ENCODE measurements at regions of chr9 and their contacts with region 1.

Region 1: GRCh38 chr9:5442400-5443011 is 4.8 kb upstream of the PLGRKT start:
- DNase-seq: peak; percentile 60 to 72 (median 71)
- H3K4me3 ChIP-seq: no peak overlapping the region
- H3K27ac ChIP-seq: no peak overlapping the region
- H3K4me1 ChIP-seq: peaks cover 0 to 23% (median 7%) of the 10 kb centered on the region in 4 experiments
- H3K27me3 ChIP-seq: no peaks in the 10 kb centered on the region

Region 2: DNA sequence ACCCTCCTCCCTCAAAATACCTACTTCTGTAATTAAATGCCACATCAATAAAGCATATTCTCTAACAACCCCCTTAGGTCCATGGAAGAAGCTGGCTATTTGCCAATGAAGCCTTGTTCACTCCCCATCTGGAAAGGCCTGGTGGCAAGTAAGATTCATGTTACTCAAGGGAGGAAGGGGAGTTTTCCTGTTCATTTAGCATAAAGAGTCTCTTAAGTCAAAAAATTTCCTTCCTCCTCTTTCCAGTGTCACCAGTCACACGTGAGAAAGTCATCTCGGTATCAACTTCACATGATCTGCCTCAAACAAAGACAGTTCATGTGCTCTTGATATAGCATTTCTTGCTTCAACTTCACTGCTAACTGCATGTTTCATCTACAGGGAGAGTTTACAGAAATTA is 153.7 kb after region 1 on chr9:
- CTCF ChIA-PET with region 1: interaction called, 14 read pairs
- POLR2A ChIA-PET with region 1: no interaction called
- DNase-seq: no peak
- H3K4me3 ChIP-seq: no peak overlapping the region
- H3K27ac ChIP-seq: no peak overlapping the region
- H3K4me1 ChIP-seq: peaks cover 0 to 12% (median 5%) of the 10 kb centered on the region in 4 experiments
- H3K27me3 ChIP-seq: no peaks in the 10 kb centered on the region